ENCODE measurements at regions of chrX and their contacts with region 1.

Region 1: DNA sequence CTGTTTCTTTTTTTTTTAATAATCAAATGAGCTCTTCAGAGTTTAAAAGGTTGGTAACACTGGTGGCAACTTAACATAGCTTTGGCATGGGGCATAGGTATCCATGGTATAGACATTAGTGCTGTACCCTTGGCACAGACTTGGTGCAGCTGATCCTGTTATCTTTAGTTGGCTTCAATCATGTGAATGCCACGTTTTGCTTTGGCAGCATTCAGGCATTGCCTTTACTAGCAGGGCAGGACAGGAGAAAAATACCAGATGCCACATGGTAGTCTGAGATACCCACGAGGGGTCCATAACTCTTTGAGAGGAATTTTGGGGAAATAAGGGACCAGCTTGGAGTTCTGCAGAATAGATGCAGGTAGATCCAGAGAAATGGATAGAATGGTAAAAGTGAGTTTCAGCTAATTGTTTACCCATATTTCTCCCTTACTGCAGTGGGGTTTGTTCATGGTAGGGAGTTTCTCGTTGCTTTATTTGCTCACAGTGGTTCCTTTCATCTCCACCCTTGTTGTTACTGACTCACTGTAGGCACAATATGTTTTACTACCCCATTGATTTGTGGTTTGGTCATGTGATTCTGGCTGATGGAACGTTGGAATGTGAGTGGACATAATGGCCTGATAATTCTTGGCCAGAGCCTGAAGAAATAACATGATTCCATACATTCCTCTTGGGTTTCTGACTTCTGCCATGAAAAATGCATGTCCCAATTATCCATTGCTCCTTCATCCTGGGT is 342.7 kb downstream of the GLUD2 start:
- DNase-seq: peak; percentile 40
- ATAC-seq: peak; percentile 87
- H3K4me3 ChIP-seq: no peak overlapping the region
- H3K27ac ChIP-seq: no peak overlapping the region
- H3K4me1 ChIP-seq: peaks cover 6 to 11% of the 10 kb centered on the region in 2 experiments; a peak in 3 of 4 replicates
- H3K27me3 ChIP-seq: no peaks in the 10 kb centered on the region
- CTCF ChIP-seq: no peak
- POLR2A ChIP-seq: no peak
- RAD21 ChIP-seq: no peak

Region 2: DNA sequence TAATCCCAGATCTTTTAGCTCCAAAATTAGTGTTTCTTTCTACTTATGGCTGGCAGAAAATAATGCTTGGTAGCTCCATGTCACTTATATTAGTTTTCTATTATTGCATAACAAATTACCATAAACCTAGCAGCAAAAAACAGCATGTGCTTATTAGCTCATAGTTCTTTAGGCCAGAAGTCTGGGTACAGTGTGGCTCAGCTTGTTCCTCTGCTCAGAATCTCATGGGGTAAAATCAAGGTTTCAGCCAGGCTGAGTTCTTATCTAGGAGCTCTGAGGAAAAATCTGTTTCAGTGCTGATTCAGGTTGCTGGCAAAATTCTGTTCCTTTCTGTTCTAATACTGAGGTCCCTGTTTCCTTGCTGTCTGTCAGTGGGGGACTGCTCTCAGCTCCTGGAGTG is 615.5 kb before region 1 on chrX:
- CTCF ChIA-PET with region 1: no interaction called
- POLR2A ChIA-PET with region 1: no interaction called
- RAD21 ChIA-PET with region 1: no interaction called
- intact Hi-C with region 1: no loop called
- DNase-seq: no peak
- ATAC-seq: no peak
- H3K4me3 ChIP-seq: no peak overlapping the region
- H3K27ac ChIP-seq: no peak overlapping the region
- H3K4me1 ChIP-seq: no peaks in the 10 kb centered on the region
- H3K27me3 ChIP-seq: no peaks in the 10 kb centered on the region
- CTCF ChIP-seq: no peak
- POLR2A ChIP-seq: no peak
- RAD21 ChIP-seq: no peak

Region 3: DNA sequence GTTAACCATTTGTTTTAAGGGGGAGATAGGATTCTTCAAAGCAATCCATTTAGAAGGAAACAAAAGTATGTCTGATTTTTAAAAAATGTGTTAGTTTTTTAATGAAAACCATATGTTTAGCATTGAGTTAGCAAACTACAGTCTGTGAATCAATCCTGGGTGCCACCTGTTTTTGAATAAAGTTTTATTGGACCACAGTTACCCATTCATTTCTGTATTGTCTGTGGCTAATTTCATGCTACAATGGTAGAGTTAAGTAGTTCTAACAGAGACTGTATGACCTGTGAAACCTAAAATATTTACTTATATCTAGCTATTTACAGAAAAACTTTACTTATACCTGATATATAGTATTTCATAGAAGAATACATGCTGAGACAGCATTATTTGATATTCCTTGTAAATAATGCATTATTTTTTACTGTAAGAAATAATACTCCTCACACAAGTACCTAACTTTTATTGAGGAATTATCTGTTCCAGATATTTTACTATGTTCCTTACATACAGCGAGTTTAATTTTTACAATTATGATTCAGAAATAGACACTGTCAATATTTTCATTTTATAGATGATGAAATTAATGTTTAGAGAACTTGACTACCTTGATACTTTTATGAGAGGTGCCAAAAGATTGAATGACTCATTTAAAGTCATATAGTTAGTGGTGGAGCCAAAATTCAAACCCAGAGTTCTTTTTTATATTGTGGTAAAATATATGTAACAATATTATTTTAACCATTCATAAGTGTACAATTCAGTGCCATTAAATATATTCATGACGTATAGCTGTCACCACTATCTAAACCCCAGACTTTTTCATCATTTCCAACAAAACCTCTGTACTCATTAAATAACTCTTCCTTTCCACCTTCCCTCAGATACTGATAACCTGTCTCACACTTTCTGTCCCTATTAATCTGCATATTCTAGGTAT is 220.8 kb before region 1 on chrX:
- CTCF ChIA-PET with region 1: no interaction called
- POLR2A ChIA-PET with region 1: no interaction called
- RAD21 ChIA-PET with region 1: no interaction called
- intact Hi-C with region 1: no loop called
- DNase-seq: no peak
- ATAC-seq: no peak
- H3K4me3 ChIP-seq: no peak overlapping the region
- H3K27ac ChIP-seq: no peak overlapping the region
- H3K4me1 ChIP-seq: no peaks in the 10 kb centered on the region
- H3K27me3 ChIP-seq: no peaks in the 10 kb centered on the region
- CTCF ChIP-seq: no peak
- POLR2A ChIP-seq: no peak
- RAD21 ChIP-seq: no peak

Region 4: GRCh38 chrX:121456315-121456714 is 66.2 kb after region 1 on chrX:
- CTCF ChIA-PET with region 1: no interaction called
- POLR2A ChIA-PET with region 1: no interaction called
- RAD21 ChIA-PET with region 1: no interaction called
- intact Hi-C with region 1: loop called (anchors 10 kb)
- DNase-seq: no peak
- ATAC-seq: no peak
- H3K4me3 ChIP-seq: no peak overlapping the region
- H3K27ac ChIP-seq: no peak overlapping the region
- H3K4me1 ChIP-seq: no peaks in the 10 kb centered on the region; a peak in 1 of 4 replicates
- H3K27me3 ChIP-seq: no peaks in the 10 kb centered on the region
- CTCF ChIP-seq: no peak
- POLR2A ChIP-seq: no peak
- RAD21 ChIP-seq: no peak

Region 5: DNA sequence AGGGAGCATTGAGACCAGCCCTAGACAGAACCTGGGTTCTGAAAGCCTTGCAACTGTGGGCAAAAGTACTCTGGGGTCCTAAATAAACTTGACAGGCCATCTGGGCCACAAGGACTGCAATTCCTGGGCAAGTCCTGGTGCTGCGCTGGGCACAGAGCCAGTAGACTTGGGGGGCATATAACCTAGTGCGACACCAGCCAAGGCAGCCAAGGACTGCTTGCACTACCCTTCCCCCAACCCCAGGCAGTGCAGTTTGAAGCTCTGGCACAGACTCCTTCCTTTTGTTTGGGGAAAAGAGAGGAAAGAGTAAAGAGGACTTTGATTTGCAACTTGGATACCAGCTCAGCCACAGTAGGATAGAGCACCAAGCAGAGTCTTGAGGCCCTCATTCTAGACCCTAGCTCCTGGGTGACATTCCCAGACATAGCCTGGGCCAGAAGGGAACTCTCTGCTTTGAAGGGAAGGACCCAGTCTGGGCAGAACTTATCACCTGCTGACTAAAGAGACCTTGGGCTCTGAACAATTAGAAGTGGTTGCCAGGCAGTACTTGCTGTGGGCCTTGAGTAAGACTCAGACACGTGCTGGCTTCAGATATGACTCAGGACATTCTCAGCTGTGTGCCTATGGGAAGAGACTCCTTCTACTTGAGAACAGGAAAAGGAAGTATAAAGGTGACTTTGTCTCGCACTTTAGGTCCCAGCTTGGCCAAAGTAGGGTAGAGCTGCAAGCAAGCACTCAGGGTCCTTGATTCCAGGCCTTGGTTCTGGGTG is 180.1 kb after region 1 on chrX:
- CTCF ChIA-PET with region 1: no interaction called
- POLR2A ChIA-PET with region 1: no interaction called
- RAD21 ChIA-PET with region 1: no interaction called
- intact Hi-C with region 1: no loop called
- DNase-seq: no peak
- ATAC-seq: no peak
- H3K4me3 ChIP-seq: no peak overlapping the region
- H3K27ac ChIP-seq: no peak overlapping the region
- H3K4me1 ChIP-seq: no peaks in the 10 kb centered on the region
- H3K27me3 ChIP-seq: no peaks in the 10 kb centered on the region
- CTCF ChIP-seq: no peak
- POLR2A ChIP-seq: no peak
- RAD21 ChIP-seq: no peak